ENCODE measurements at regions of chr1 and their contacts with region 1.

Region 1: GRCh38 chr1:205791568-205792180 is 16.4 kb upstream of the RAB29 start:
- DNase-seq: peak; percentile 44 to 79 (median 57)
- ATAC-seq: peak; percentile 91
- H3K4me3 ChIP-seq: no peak overlapping the region
- H3K4me3 Mint-ChIP-seq: no peak overlapping the region
- H3K27ac ChIP-seq: no peak overlapping the region
- H3K27ac Mint-ChIP-seq: no peak overlapping the region
- H3K4me1 ChIP-seq: no peaks in the 10 kb centered on the region
- H3K4me1 Mint-ChIP-seq: no peaks in the 10 kb centered on the region
- H3K27me3 ChIP-seq: no peaks in the 10 kb centered on the region
- H3K27me3 Mint-ChIP-seq: no peaks in the 10 kb centered on the region
- CTCF ChIP-seq: peak; percentile 82

Region 2: DNA sequence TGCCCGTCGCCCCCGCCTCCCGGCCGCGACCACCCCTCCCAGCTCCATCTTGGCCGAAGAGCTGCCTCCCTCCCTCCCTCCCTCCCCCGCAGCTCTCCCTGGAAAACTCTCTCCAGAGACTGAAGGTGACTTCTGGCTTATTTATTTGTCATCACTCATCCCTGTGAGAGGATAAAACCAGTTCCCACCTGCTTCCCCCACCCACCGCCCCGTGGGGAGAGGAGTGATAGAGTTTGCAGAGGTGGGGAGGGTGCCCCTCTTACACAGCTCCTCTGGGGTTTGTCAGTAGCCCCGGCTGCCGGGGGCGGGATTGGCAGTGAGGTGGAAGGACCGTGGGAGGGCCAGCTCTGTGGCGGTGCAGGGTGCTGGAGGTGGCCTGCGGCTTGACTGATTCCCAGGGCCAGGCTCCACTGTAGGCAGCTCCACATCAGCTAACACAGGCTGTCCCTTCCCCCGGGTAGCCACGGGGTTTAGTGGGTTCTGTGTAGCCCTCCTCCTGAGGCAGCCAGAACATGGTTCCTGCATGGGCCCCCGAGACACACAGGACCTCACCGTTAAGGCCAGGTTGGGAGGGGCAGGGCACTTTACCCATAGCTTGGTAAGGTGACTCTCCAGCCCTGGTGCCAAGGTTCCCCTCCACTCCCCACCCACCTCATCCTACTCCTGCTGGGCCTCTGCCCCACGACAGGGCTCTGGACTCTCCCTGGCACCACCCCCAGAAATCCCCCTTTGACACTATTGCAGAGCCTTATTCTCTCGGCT is 222.1 kb before region 1 on chr1:
- CTCF ChIA-PET with region 1: no interaction called
- POLR2A ChIA-PET with region 1: no interaction called
- intact Hi-C with region 1: no loop called
- DNase-seq: no peak
- ATAC-seq: no peak
- H3K4me3 ChIP-seq: no peak overlapping the region
- H3K4me3 Mint-ChIP-seq: no peak overlapping the region
- H3K27ac ChIP-seq: no peak overlapping the region
- H3K27ac Mint-ChIP-seq: no peak overlapping the region
- H3K4me1 ChIP-seq: peaks cover 6% of the 10 kb centered on the region
- H3K4me1 Mint-ChIP-seq: no peaks in the 10 kb centered on the region
- H3K27me3 ChIP-seq: peaks cover 32 to 59% of the 10 kb centered on the region in 2 experiments
- H3K27me3 Mint-ChIP-seq: peaks cover 62% of the 10 kb centered on the region
- CTCF ChIP-seq: no peak

Region 3: DNA sequence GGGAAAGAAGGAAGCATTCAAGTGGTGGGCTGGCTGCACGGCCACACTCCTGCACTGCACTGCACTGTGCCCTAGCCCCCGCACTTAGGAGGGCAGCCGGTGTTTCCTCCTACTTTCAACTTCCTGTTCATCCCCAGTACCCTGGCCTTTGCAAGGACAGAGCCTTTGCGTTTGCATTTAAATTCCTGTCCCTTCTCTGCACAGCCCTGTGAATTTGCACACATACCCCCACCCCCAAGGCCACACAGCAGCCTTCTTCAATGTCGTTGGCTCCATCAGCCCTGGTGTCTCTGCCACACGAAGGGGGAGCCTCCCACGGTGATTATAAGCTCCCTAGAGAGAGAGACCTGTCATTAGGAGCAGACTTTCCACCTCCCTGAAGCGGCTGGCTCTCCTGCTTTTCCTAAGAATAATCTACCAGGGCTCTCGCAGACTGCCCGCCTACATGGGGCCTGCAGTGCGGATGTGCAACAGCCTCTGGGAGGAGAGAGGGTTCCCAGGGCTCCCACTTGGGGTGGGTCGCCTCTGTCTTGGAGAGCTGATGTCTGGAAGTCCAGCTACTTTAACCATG is 98.2 kb before region 1 on chr1:
- CTCF ChIA-PET with region 1: no interaction called
- POLR2A ChIA-PET with region 1: no interaction called
- intact Hi-C with region 1: no loop called
- DNase-seq: no peak
- ATAC-seq: no peak
- H3K4me3 ChIP-seq: no peak overlapping the region
- H3K4me3 Mint-ChIP-seq: no peak overlapping the region
- H3K27ac ChIP-seq: no peak overlapping the region
- H3K27ac Mint-ChIP-seq: no peak overlapping the region
- H3K4me1 ChIP-seq: no peaks in the 10 kb centered on the region
- H3K4me1 Mint-ChIP-seq: no peaks in the 10 kb centered on the region
- H3K27me3 ChIP-seq: peaks cover 0 to 7% of the 10 kb centered on the region in 2 experiments
- H3K27me3 Mint-ChIP-seq: peaks cover 35% of the 10 kb centered on the region
- CTCF ChIP-seq: no peak

Region 4: DNA sequence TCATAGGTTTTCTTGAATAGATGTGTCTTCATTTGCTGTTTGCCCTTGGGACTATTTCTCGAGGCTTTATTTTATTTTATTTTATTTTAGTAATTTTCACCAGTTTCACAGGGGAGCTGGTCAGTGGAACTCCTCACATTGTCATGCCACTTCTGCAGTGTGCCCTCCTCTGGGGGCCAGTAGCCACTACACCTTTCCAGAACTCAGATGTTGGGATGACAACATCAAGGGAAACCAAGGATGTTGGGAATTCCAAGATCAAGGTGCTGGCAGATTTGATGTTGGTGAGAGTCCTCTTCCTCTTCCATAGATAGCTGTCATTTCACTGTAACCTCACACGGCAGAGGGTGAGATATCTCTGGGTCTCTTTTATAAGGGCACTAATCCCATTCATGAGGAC is 116.1 kb after region 1 on chr1:
- CTCF ChIA-PET with region 1: interaction called, 5 read pairs
- POLR2A ChIA-PET with region 1: interaction called, 3 read pairs
- intact Hi-C with region 1: loop called in 1 of 2 experiments (anchors 2 kb)
- DNase-seq: no peak
- ATAC-seq: no peak
- H3K4me3 ChIP-seq: no peak overlapping the region
- H3K4me3 Mint-ChIP-seq: no peak overlapping the region
- H3K27ac ChIP-seq: no peak overlapping the region
- H3K27ac Mint-ChIP-seq: no peak overlapping the region
- H3K4me1 ChIP-seq: no peaks in the 10 kb centered on the region
- H3K4me1 Mint-ChIP-seq: no peaks in the 10 kb centered on the region
- H3K27me3 ChIP-seq: no peaks in the 10 kb centered on the region
- H3K27me3 Mint-ChIP-seq: no peaks in the 10 kb centered on the region
- CTCF ChIP-seq: peak; percentile 12

Region 5: GRCh38 chr1:205919026-205919746 is 127.5 kb after region 1 on chr1:
- CTCF ChIA-PET with region 1: interaction called, 8 read pairs
- POLR2A ChIA-PET with region 1: interaction called, 3 read pairs
- intact Hi-C with region 1: loop called in 1 of 2 experiments (anchors 5 kb)
- DNase-seq: peak; percentile 33 to 79 (median 57)
- ATAC-seq: peak; percentile 57
- H3K4me3 ChIP-seq: no peak overlapping the region
- H3K4me3 Mint-ChIP-seq: no peak overlapping the region
- H3K27ac ChIP-seq: no peak overlapping the region
- H3K27ac Mint-ChIP-seq: no peak overlapping the region
- H3K4me1 ChIP-seq: no peaks in the 10 kb centered on the region
- H3K4me1 Mint-ChIP-seq: no peaks in the 10 kb centered on the region
- H3K27me3 ChIP-seq: no peaks in the 10 kb centered on the region
- H3K27me3 Mint-ChIP-seq: peaks cover under 1% of the 10 kb centered on the region
- CTCF ChIP-seq: peak; percentile 86

Measured in CD4-positive, alpha-beta T cell (primary cell).